ENCODE measurements at regions of chr4 and their contacts with region 1.

Region 1: GRCh38 chr4:186137196-186137794 is 32.8 kb downstream of the FAM149A start:
- DNase-seq: no peak
- ATAC-seq: no peak
- H3K4me3 Mint-ChIP-seq: no peak overlapping the region
- H3K27ac Mint-ChIP-seq: no peak overlapping the region
- H3K4me1 Mint-ChIP-seq: peaks cover 22% of the 10 kb centered on the region
- H3K27me3 Mint-ChIP-seq: no peaks in the 10 kb centered on the region
- CTCF ChIP-seq: peak; percentile 38; the same call in 1 of the 2 replicates

Region 2: GRCh38 chr4:186029571-186030398 is 107.5 kb before region 1 on chr4:
- CTCF ChIA-PET with region 1: interaction called, 15 read pairs
- POLR2A ChIA-PET with region 1: no interaction called
- DNase-seq: peak; percentile 38
- ATAC-seq: peak; percentile 6
- H3K4me3 Mint-ChIP-seq: no peak overlapping the region
- H3K27ac Mint-ChIP-seq: peak overlapping the region; percentile 77
- H3K4me1 Mint-ChIP-seq: peaks cover 59% of the 10 kb centered on the region
- H3K27me3 Mint-ChIP-seq: peaks cover 2% of the 10 kb centered on the region; the same call in 1 of the 2 replicates
- CTCF ChIP-seq: no peak

Region 3: GRCh38 chr4:186037692-186038658 is 99.3 kb before region 1 on chr4:
- CTCF ChIA-PET with region 1: interaction called, 31 read pairs
- POLR2A ChIA-PET with region 1: no interaction called
- DNase-seq: no peak
- ATAC-seq: peak; percentile 83
- H3K4me3 Mint-ChIP-seq: no peak overlapping the region
- H3K27ac Mint-ChIP-seq: 0 out of 2 replicates have a peak overlapping the region, but pooled peaks have one; percentile 60
- H3K4me1 Mint-ChIP-seq: peaks cover 9% of the 10 kb centered on the region; the same call in 1 of the 2 replicates
- H3K27me3 Mint-ChIP-seq: peaks cover 17% of the 10 kb centered on the region
- CTCF ChIP-seq: peak; percentile 81

Region 4: GRCh38 chr4:186067757-186068385 is 69.4 kb before region 1 on chr4:
- CTCF ChIA-PET with region 1: interaction called, 71 read pairs
- POLR2A ChIA-PET with region 1: no interaction called
- DNase-seq: peak; percentile 30
- ATAC-seq: peak; percentile 90
- H3K4me3 Mint-ChIP-seq: no peak overlapping the region
- H3K27ac Mint-ChIP-seq: no peak overlapping the region
- H3K4me1 Mint-ChIP-seq: peaks cover 15% of the 10 kb centered on the region
- H3K27me3 Mint-ChIP-seq: no peaks in the 10 kb centered on the region
- CTCF ChIP-seq: no peak

Region 5: GRCh38 chr4:186078980-186079695 is 58.2 kb before region 1 on chr4:
- CTCF ChIA-PET with region 1: interaction called, 19 read pairs
- POLR2A ChIA-PET with region 1: no interaction called
- DNase-seq: peak; percentile 47
- ATAC-seq: peak; percentile 68
- H3K4me3 Mint-ChIP-seq: no peak overlapping the region
- H3K27ac Mint-ChIP-seq: peak overlapping the region; percentile 58
- H3K4me1 Mint-ChIP-seq: peaks cover 40% of the 10 kb centered on the region
- H3K27me3 Mint-ChIP-seq: no peaks in the 10 kb centered on the region; the same call in 1 of the 2 replicates
- CTCF ChIP-seq: no peak

Region 6: GRCh38 chr4:186118582-186118981 is 18.7 kb before region 1 on chr4:
- CTCF ChIA-PET with region 1: interaction called, 10 read pairs
- POLR2A ChIA-PET with region 1: no interaction called
- DNase-seq: no peak
- ATAC-seq: no peak
- H3K4me3 Mint-ChIP-seq: no peak overlapping the region
- H3K27ac Mint-ChIP-seq: no peak overlapping the region
- H3K4me1 Mint-ChIP-seq: peaks cover 21% of the 10 kb centered on the region
- H3K27me3 Mint-ChIP-seq: no peaks in the 10 kb centered on the region; the same call in 1 of the 2 replicates
- CTCF ChIP-seq: no peak